ENCODE measurements at regions of chr7 and their contacts with region 1.

Region 1: GRCh38 chr7:94449148-94449725 is 54.5 kb downstream of the COL1A2 start:
- DNase-seq: peak in 1 of 2 experiments; percentile 24
- H3K4me3 ChIP-seq: no peak overlapping the region
- H3K4me3 Mint-ChIP-seq: no peak overlapping the region
- H3K27ac Mint-ChIP-seq: no peak overlapping the region
- H3K4me1 ChIP-seq: peaks cover 15% of the 10 kb centered on the region; the same call in 1 of the 2 replicates
- H3K4me1 Mint-ChIP-seq: peaks cover 19% of the 10 kb centered on the region
- H3K27me3 ChIP-seq: no peaks in the 10 kb centered on the region
- H3K27me3 Mint-ChIP-seq: no peaks in the 10 kb centered on the region
- CTCF ChIP-seq: peak; percentile 52 to 53

Region 2: DNA sequence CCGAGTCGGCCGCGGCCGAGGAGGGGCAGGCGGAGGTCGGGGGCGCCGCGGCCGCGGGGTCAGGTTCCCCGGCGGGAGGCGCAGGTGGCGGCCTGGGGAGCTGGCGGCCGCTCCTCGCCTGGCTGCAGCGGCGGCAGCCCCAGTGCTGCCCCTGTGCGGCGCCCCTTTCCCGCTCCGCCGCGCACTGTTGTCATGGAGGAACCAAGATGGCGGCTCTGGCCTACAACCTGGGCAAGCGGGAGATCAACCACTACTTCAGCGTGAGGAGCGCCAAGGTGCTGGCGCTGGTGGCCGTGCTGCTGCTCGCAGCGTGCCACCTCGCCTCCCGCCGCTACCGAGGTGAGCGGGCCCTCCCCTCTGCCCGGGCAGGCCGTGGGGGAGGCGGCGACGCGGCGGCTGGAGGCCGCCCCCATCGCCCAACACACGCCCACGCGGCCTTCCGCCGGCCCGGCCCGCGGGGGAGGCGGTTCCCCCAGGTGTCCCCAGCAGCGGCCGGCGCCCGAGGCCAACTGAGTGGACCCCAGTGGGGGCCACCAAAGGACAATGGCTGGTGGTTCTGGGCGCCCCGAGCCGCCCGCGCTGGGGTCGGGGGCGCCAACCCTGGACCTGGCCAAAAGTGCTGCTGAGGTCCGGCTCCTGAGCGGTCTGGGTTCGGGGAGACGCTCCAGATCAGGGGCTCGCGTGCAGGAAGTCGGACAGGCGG is 60.8 kb after region 1 on chr7:
- CTCF ChIA-PET with region 1: interaction called, 6 read pairs
- POLR2A ChIA-PET with region 1: no interaction called
- intact Hi-C with region 1: loop called (anchors 2 kb)
- DNase-seq: peak; percentile 74 to 84
- H3K4me3 ChIP-seq: peak overlapping the region; percentile 72
- H3K4me3 Mint-ChIP-seq: peak overlapping the region; percentile 79
- H3K27ac Mint-ChIP-seq: peak overlapping the region; percentile 65
- H3K4me1 ChIP-seq: peaks cover 23% of the 10 kb centered on the region
- H3K4me1 Mint-ChIP-seq: peaks cover 7% of the 10 kb centered on the region
- H3K27me3 ChIP-seq: no peaks in the 10 kb centered on the region
- H3K27me3 Mint-ChIP-seq: no peaks in the 10 kb centered on the region
- CTCF ChIP-seq: peak in 1 of 2 experiments; percentile 30

Region 3: GRCh38 chr7:94907026-94907810 is 458.0 kb after region 1 on chr7 and contains the start of gene PPP1R9A:
- CTCF ChIA-PET with region 1: no interaction called
- POLR2A ChIA-PET with region 1: no interaction called
- intact Hi-C with region 1: loop called (anchors 10 kb)
- DNase-seq: peak; percentile 82
- H3K4me3 ChIP-seq: peak within 1 kb of the TSS; percentile 79
- H3K4me3 Mint-ChIP-seq: peak within 1 kb of the TSS; percentile 79
- H3K27ac Mint-ChIP-seq: peak within 1 kb of the TSS; percentile 89
- H3K4me1 ChIP-seq: peaks cover 10% of the 10 kb centered on the region
- H3K4me1 Mint-ChIP-seq: no peaks in the 10 kb centered on the region
- H3K27me3 ChIP-seq: no peaks in the 10 kb centered on the region
- H3K27me3 Mint-ChIP-seq: no peaks in the 10 kb centered on the region
- CTCF ChIP-seq: peak; percentile 30 to 68
- total RNA-seq, gene PPP1R9A: 37.2 and 37.4 TPM in 2 replicates

Region 4: DNA sequence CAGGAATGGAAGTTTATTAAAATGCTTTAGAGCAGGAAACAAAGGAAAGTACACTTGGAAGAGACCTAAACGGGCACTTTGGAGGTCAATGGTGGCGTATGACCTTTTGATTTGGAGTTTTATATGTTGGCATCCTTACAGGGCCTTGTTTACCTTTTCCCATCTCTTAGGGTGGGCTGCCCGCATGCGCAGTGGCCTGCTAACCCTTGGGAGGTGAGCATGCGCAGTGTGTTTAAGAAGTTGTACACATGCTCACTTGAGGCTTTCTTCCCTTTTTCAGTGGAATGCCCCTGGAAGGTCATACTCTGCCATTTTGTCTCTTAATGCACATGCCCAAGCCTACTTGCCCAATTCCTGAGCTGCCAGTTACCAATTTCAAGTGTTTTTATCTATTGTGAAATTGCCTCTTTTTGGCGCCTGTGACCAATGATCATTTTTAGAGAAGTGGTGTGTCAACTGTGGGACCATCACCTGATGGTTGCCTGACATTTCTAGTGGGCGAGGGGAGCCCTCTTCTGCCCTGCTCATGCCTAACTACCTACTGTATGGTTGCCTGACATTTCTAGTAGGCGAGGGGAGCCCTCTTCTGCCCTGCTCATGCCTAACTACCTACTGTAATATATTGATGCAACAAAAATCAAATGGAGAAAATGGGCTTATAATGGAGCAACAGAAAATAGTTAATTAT is 596.1 kb after region 1 on chr7:
- CTCF ChIA-PET with region 1: no interaction called
- POLR2A ChIA-PET with region 1: no interaction called
- intact Hi-C with region 1: loop called (anchors 1 kb)
- DNase-seq: peak; percentile 63
- H3K4me3 ChIP-seq: no peak overlapping the region
- H3K4me3 Mint-ChIP-seq: no peak overlapping the region
- H3K27ac Mint-ChIP-seq: no peak overlapping the region
- H3K4me1 ChIP-seq: peaks cover 5% of the 10 kb centered on the region; the same call in 1 of the 2 replicates
- H3K4me1 Mint-ChIP-seq: no peaks in the 10 kb centered on the region
- H3K27me3 ChIP-seq: no peaks in the 10 kb centered on the region
- H3K27me3 Mint-ChIP-seq: no peaks in the 10 kb centered on the region
- CTCF ChIP-seq: peak; percentile 17 to 59

Region 5: DNA sequence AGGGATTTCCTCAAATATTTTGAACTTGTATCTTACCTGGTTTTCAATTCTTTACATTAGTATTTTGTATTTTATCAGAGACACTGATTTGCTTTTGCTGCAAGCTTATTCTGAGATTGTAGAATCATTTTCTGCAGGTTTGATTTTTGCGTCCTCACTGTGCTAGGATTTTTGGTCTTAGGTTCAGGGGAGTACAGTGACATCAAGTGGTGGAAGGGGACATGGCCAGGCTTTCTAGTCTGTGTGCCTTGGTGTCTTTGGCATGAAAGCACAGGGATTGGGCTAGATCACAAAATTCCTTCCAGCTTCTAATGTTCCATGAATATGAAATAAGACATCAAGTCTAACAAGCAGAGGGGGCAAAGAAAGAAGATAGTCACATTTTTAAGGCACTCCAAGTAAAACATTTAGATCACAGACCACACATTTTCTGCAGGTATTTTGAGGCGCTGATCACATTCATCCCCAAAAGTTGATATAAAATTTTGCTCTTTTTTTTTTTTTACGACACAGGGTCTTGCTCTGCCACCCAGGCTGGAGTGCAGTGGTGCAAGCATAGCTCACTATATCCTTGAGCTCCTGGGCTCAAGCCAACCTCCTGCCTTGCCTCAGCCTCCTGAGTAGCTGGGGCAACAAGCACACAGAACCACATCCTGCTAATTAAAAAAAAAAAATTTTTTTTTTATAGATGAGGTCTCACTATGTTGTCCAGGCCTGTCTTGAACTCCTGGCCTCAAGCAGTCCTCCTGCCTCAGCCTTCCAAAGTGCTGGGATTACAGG is 750.7 kb after region 1 on chr7:
- CTCF ChIA-PET with region 1: interaction called, 4 read pairs
- POLR2A ChIA-PET with region 1: no interaction called
- intact Hi-C with region 1: loop called (anchors 5 kb)
- DNase-seq: peak in 1 of 2 experiments; percentile 48
- H3K4me3 ChIP-seq: no peak overlapping the region
- H3K4me3 Mint-ChIP-seq: no peak overlapping the region
- H3K27ac Mint-ChIP-seq: no peak overlapping the region
- H3K4me1 ChIP-seq: no peaks in the 10 kb centered on the region
- H3K4me1 Mint-ChIP-seq: no peaks in the 10 kb centered on the region
- H3K27me3 ChIP-seq: no peaks in the 10 kb centered on the region
- H3K27me3 Mint-ChIP-seq: no peaks in the 10 kb centered on the region
- CTCF ChIP-seq: peak; percentile 63 to 88

Region 6: GRCh38 chr7:95246831-95247370 is 797.7 kb after region 1 on chr7:
- CTCF ChIA-PET with region 1: interaction called, 6 read pairs
- POLR2A ChIA-PET with region 1: no interaction called
- intact Hi-C with region 1: loop called (anchors 2 kb)
- DNase-seq: peak; percentile 62 to 69
- H3K4me3 ChIP-seq: no peak overlapping the region
- H3K4me3 Mint-ChIP-seq: no peak overlapping the region
- H3K27ac Mint-ChIP-seq: no peak overlapping the region
- H3K4me1 ChIP-seq: no peaks in the 10 kb centered on the region
- H3K4me1 Mint-ChIP-seq: no peaks in the 10 kb centered on the region
- H3K27me3 ChIP-seq: no peaks in the 10 kb centered on the region
- H3K27me3 Mint-ChIP-seq: no peaks in the 10 kb centered on the region
- CTCF ChIP-seq: peak; percentile 71 to 77

Measured in Caco-2 (cell line).